Heart right ventricle (tissue), 16 donors: ENCODE measurements at regions of chr6 and their contacts with region 1.

Region 1: GRCh38 chr6:15441215-15441868 is 195.5 kb downstream of the JARID2 start:
- DNase-seq: peak in 1 of 2 donors; percentile 56
- ATAC-seq: peak; percentile 51 to 75 (median 70)
- H3K4me3 ChIP-seq: no peak overlapping the region
- H3K27ac ChIP-seq: no peak overlapping the region
- H3K4me1 ChIP-seq: peaks cover 4 to 90% (median 70%) of the 10 kb centered on the region in 9 donors
- H3K27me3 ChIP-seq: no peaks in the 10 kb centered on the region
- CTCF ChIP-seq: peak; percentile 69 to 88 (median 80)

Region 2: GRCh38 chr6:15264902-15265761 is 176.2 kb before region 1 on chr6:
- intact Hi-C with region 1: loop called in 1 of 10 experiments (anchors 5 kb)
- DNase-seq: peak in 1 of 2 donors; percentile 42
- ATAC-seq: peak; percentile 45 to 79 (median 66)
- H3K4me3 ChIP-seq: peak overlapping the region in 4 of 10 donors; percentile 12 to 18 (median 14)
- H3K27ac ChIP-seq: peak overlapping the region in 9 of 10 donors; percentile 40 to 84 (median 70)
- H3K4me1 ChIP-seq: peaks cover 22 to 89% (median 77%) of the 10 kb centered on the region in 9 donors
- H3K27me3 ChIP-seq: no peaks in the 10 kb centered on the region
- CTCF ChIP-seq: no peak

Region 3: DNA sequence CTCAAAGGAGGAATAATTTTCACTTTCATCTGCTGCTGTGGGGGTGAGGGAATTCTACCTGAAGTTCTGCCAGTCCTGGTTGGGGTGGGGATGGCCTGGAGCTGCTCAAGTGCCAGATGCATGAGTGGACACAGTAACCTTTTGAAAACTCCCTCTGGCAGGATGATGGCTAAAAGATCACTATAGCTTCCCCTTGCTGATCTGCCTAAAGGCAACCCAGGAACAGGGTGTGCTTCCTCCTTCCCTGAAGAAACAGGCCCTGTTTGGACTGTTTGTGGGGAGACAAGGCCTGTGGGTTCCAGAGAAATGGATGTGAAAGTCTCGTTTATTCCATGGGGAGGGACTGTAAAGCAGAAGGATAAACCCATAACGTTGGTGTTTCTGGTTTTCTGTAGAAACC is 44.6 kb after region 1 on chr6:
- intact Hi-C with region 1: loop called in 3 of 10 experiments (anchors 2 to 5 kb)
- DNase-seq: no peak
- ATAC-seq: peak in 2 of 8 donors; percentile 30 to 43
- H3K4me3 ChIP-seq: no peak overlapping the region
- H3K27ac ChIP-seq: no peak overlapping the region
- H3K4me1 ChIP-seq: peaks cover 0 to 37% (median 19%) of the 10 kb centered on the region in 9 donors
- H3K27me3 ChIP-seq: no peaks in the 10 kb centered on the region
- CTCF ChIP-seq: no peak

Region 4: DNA sequence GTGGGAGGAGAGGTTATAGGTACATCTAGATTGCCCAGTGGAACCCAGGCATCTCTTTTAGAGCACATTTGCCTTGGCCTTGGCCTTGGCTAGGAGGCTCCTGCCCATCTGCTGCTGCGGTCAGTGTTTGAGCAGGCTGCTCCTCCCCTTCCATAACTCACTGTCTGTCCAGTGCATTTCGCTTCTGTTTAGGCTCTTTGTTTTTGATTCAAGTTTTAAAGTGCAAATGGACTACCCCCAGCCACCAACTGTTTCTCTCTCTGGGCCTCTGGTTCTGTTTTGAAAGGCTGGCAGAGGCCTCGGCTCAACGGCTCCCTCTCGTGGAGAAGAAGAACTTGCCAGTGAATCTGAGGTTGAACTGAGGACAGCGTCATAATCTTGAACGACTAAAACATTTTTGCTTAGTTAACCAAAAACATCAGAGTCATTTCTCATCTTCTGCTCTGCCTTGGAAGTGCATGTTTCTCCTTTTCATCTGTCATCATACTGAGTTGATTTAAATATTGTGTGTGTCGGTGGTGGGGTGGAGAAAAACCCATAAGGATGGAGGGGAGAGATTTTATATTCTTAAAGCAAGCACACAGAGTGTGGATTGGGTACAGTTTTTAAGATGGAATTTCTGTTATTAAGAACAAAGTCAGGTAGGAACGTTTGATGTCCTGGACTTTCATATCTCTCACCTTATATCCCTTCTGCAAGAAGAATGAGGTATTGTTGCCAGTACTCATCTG is 50.1 kb after region 1 on chr6:
- intact Hi-C with region 1: loop called in 3 of 10 experiments (anchors 2 to 5 kb)
- DNase-seq: peak; percentile 72 to 84
- ATAC-seq: peak in 7 of 8 donors; percentile 55 to 86 (median 78)
- H3K4me3 ChIP-seq: no peak overlapping the region
- H3K27ac ChIP-seq: peak overlapping the region in 5 of 10 donors; percentile 9 to 55 (median 36)
- H3K4me1 ChIP-seq: peaks cover 4 to 43% (median 29%) of the 10 kb centered on the region in 9 donors
- H3K27me3 ChIP-seq: no peaks in the 10 kb centered on the region
- CTCF ChIP-seq: peak; percentile 88 to 98 (median 97)